Right ventricle myocardium inferior (tissue), 1 donor: ENCODE measurements at regions of chr9 and their contacts with region 1.

Region 1: GRCh38 chr9:131668439-131669268 is 71.2 kb downstream of the RAPGEF1 start:
- DNase-seq: no peak
- ATAC-seq: no peak

Region 2: GRCh38 chr9:131503626-131504465 is 164.8 kb before region 1 on chr9:
- intact Hi-C with region 1: no loop called
- DNase-seq: no peak
- ATAC-seq: no peak

Region 3: GRCh38 chr9:131618071-131618479 is 50.6 kb before region 1 on chr9:
- intact Hi-C with region 1: loop called (anchors 5 kb)
- DNase-seq: no peak
- ATAC-seq: peak; percentile 82

Region 4: DNA sequence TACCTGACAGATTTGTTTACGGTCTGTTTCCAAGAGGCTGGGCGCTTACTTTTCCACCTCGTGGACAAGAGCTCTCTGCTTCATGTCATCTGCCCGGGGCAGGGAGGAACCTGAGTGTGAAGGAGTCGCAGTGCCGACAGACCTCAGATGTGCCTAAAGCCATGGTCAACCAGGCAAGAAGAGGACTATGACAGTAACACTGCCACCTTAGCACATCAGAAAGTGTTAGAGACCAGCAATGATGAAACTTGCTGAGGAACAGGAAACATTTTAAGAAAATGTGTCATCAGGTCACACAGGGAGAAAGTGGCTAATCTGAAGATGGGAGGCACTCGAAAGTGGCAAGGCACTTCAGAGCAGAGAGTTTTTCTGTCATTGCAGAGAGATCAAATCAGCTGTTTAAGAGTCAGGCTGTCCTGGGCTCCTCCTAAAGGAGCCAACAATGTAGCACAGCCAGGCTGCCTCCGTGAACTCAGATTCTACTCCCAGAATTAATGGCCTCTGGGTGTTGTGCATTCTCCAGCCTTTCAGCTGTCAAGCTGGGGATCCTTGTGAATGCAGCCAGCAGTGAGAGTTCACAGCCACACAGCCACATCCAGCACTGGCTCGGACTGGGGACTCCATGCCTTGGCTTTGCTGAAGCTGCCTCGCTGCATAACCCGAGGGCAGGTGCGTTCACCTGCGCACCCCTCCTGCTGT is 23.4 kb before region 1 on chr9:
- intact Hi-C with region 1: no loop called
- DNase-seq: no peak
- ATAC-seq: no peak

Region 5: GRCh38 chr9:131697097-131697496 is 28.4 kb after region 1 on chr9:
- intact Hi-C with region 1: no loop called
- DNase-seq: peak; percentile 77
- ATAC-seq: peak; percentile 71

Region 6: DNA sequence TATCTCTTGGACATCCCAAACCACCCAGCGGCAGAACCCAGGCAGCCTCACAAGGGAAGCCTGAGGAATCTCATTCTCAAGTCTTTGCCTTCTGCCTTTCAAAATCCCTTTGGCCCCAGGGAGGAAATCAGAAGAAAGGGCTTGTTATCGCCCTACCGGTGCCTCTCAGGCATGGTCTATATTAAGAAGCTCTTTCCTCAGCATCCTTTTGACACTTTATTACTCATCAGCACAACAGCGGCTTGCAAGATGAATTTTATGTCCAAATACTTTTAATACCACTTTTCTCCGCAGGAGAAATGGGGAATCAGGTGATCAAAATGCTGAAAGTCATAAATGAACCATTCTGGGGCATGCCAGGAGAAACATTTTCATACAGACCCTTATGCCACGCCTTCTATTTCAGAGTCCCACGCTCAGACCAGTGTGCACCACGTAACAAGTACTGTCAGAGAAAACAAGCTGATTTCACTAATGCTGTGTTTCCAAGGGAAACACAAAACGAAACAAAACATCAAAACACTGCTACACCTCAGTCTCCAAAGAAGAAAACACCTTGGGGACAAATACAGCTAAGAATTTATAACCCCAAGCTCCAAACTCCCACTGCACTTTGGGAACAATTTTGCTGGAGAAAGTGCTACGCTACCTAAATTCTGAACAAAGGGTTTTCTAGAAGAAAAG is 41.3 kb after region 1 on chr9:
- intact Hi-C with region 1: loop called (anchors 5 kb)
- DNase-seq: no peak
- ATAC-seq: no peak

Region 7: GRCh38 chr9:131739980-131740648 is 71.5 kb after region 1 on chr9 and contains the start of gene RAPGEF1:
- intact Hi-C with region 1: no loop called
- DNase-seq: peak; percentile 90
- ATAC-seq: peak; percentile 71
- total RNA-seq, gene RAPGEF1: 125 TPM